ENCODE measurements at regions of chr6 and their contacts with region 1.

Region 1: GRCh38 chr6:26196846-26197648 is 109.8 kb downstream of the HFE start:
- DNase-seq: peak; percentile 99
- ATAC-seq: peak; percentile 61
- H3K4me3 ChIP-seq: peak overlapping the region; percentile 73
- H3K27ac ChIP-seq: peak overlapping the region; percentile 80
- H3K4me1 ChIP-seq: no peaks in the 10 kb centered on the region
- H3K27me3 ChIP-seq: no peaks in the 10 kb centered on the region
- CTCF ChIP-seq: no peak
- EP300 ChIP-seq: no peak
- POLR2A ChIP-seq: peak; percentile 99
- RAD21 ChIP-seq: no peak

Region 2: GRCh38 chr6:25788305-25788922 is 408.6 kb before region 1 on chr6:
- CTCF ChIA-PET with region 1: no interaction called
- POLR2A ChIA-PET with region 1: no interaction called
- RAD21 ChIA-PET with region 1: no interaction called
- SMC1A ChIA-PET with region 1: no interaction called
- in situ Hi-C with region 1: no loop called
- intact Hi-C with region 1: no loop called
- DNase-seq: no peak
- ATAC-seq: peak; percentile 82
- H3K4me3 ChIP-seq: no peak overlapping the region
- H3K27ac ChIP-seq: no peak overlapping the region
- H3K4me1 ChIP-seq: no peaks in the 10 kb centered on the region
- H3K27me3 ChIP-seq: no peaks in the 10 kb centered on the region; a peak in 1 of 4 replicates
- CTCF ChIP-seq: peak; percentile 55 to 69 (median 56); a peak in 5 of 6 replicates
- EP300 ChIP-seq: no peak
- POLR2A ChIP-seq: no peak
- RAD21 ChIP-seq: peak; percentile 58

Region 3: GRCh38 chr6:26031595-26032339 is 165.3 kb before region 1 on chr6:
- CTCF ChIA-PET with region 1: no interaction called
- POLR2A ChIA-PET with region 1: interaction called, 4 read pairs
- RAD21 ChIA-PET with region 1: interaction called, 3 read pairs
- SMC1A ChIA-PET with region 1: interaction called, 3 read pairs
- in situ Hi-C with region 1: no loop called
- intact Hi-C with region 1: loop called (anchors 5 kb)
- DNase-seq: peak; percentile 97
- ATAC-seq: peak; percentile 70
- H3K4me3 ChIP-seq: peak overlapping the region; percentile 75
- H3K27ac ChIP-seq: peak overlapping the region; percentile 95
- H3K4me1 ChIP-seq: peaks cover 9% of the 10 kb centered on the region; the same call in 1 of the 2 replicates
- H3K27me3 ChIP-seq: no peaks in the 10 kb centered on the region
- CTCF ChIP-seq: 0 out of 6 replicates have a peak, but pooled peaks of 1 of the 3 experiments have one; percentile 11
- EP300 ChIP-seq: peak in 1 of 2 experiments; percentile 10; a peak in 1 of 4 replicates
- POLR2A ChIP-seq: peak; percentile 96
- RAD21 ChIP-seq: no peak

Region 4: DNA sequence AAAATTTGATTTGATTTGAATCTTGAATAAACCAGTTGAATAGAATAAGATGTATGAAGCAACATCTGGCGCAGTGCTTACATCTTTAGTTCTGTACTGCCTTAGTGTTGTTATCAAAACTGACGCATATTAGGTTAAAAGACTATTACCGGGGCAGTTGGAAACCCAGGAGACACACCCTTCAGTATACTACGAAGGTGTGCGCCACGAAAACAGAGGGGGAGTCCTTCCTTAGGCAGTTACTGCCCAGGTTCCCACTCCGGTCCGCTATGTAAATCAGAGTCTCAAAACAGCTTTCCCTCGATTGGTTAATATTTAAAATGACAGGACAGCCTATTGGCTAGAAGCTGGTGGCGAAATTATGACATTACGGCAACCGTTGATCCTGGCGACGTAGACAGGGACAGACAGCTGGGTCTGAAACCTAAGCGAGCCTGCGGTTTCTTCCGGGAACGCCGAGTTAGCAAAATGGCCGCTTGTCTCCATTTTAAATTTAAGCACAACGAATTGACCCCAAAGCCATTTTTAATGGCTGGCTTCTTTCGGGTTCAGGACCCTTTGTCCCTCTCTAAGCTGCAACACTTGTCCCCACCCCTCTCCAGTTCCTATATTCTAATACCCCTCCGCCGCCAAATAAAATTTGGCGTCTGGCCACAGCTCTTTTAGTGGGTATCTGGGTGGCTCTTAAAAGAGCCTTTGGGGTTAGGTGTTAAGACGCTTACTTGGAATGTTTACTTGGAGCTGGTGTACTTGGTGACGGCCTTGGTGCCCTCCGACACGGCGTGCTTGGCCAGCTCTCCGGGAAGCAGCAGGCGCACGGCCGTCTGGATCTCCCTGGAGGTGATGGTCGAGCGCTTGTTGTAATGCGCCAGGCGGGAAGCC is 74.0 kb before region 1 on chr6:
- CTCF ChIA-PET with region 1: interaction called, 9 read pairs
- POLR2A ChIA-PET with region 1: interaction called, 20 read pairs
- RAD21 ChIA-PET with region 1: interaction called, 12 read pairs
- SMC1A ChIA-PET with region 1: interaction called, 19 read pairs
- in situ Hi-C with region 1: loop called (anchors 5 kb)
- intact Hi-C with region 1: loop called (anchors 1 kb)
- DNase-seq: peak; percentile 99
- ATAC-seq: peak; percentile 71
- H3K4me3 ChIP-seq: peak overlapping the region; percentile 65
- H3K27ac ChIP-seq: peak overlapping the region; percentile 95
- H3K4me1 ChIP-seq: peaks cover 3% of the 10 kb centered on the region; the same call in 1 of the 2 replicates
- H3K27me3 ChIP-seq: no peaks in the 10 kb centered on the region
- CTCF ChIP-seq: no peak
- EP300 ChIP-seq: peak; percentile 85 to 93; a peak in 3 of 4 replicates
- POLR2A ChIP-seq: peak; percentile 86
- RAD21 ChIP-seq: no peak

Region 5: GRCh38 chr6:26183581-26184366 is 13.3 kb before region 1 on chr6:
- CTCF ChIA-PET with region 1: interaction called, 12 read pairs
- POLR2A ChIA-PET with region 1: interaction called, 109 read pairs
- RAD21 ChIA-PET with region 1: interaction called, 23 read pairs
- SMC1A ChIA-PET with region 1: interaction called, 13 read pairs
- in situ Hi-C with region 1: no loop called
- intact Hi-C with region 1: no loop called
- DNase-seq: peak; percentile 84
- ATAC-seq: peak; percentile 71
- H3K4me3 ChIP-seq: peak overlapping the region; percentile 59
- H3K27ac ChIP-seq: peak overlapping the region; percentile 78
- H3K4me1 ChIP-seq: peaks cover 23% of the 10 kb centered on the region
- H3K27me3 ChIP-seq: no peaks in the 10 kb centered on the region
- CTCF ChIP-seq: no peak
- EP300 ChIP-seq: no peak
- POLR2A ChIP-seq: peak; percentile 85
- RAD21 ChIP-seq: no peak

Region 6: DNA sequence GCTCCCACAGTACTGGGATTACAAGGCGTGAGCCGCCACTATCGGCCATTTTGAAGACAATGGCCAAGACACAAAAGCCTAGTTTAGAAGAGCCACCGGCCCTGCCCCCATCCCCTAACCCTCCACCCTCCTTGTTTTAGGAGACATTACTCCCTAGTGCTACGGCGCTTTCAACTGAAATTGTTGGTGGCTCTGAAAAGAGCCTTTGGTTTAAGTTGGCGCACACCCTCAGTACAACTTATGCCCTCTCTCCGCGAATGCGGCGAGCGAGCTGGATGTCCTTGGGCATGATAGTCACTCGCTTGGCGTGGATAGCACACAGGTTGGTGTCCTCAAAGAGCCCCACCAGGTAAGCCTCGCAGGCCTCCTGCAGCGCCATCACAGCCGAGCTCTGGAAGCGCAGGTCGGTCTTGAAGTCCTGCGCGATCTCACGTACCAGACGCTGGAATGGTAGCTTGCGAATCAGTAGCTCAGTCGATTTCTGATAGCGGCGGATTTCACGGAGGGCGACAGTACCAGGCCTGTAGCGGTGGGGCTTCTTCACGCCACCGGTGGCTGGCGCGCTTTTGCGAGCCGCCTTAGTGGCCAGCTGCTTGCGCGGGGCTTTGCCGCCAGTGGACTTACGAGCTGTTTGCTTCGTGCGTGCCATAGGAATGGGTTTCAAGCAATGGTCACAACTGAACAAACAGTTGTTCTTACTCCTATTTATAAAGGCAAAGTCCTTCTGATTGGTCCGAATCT is 53.1 kb after region 1 on chr6:
- CTCF ChIA-PET with region 1: interaction called, 9 read pairs
- POLR2A ChIA-PET with region 1: interaction called, 16 read pairs
- RAD21 ChIA-PET with region 1: interaction called, 23 read pairs
- SMC1A ChIA-PET with region 1: interaction called, 4 read pairs
- in situ Hi-C with region 1: no loop called
- intact Hi-C with region 1: no loop called
- DNase-seq: peak; percentile 97
- ATAC-seq: peak; percentile 64
- H3K4me3 ChIP-seq: peak overlapping the region; percentile 76
- H3K27ac ChIP-seq: peak overlapping the region; percentile 91
- H3K4me1 ChIP-seq: no peaks in the 10 kb centered on the region; the same call in 1 of the 2 replicates
- H3K27me3 ChIP-seq: no peaks in the 10 kb centered on the region
- CTCF ChIP-seq: peak; percentile 56 to 67 (median 65)
- EP300 ChIP-seq: no peak
- POLR2A ChIP-seq: peak; percentile 97
- RAD21 ChIP-seq: 0 out of 2 replicates have a peak, but pooled peaks have one; percentile 22

Region 7: DNA sequence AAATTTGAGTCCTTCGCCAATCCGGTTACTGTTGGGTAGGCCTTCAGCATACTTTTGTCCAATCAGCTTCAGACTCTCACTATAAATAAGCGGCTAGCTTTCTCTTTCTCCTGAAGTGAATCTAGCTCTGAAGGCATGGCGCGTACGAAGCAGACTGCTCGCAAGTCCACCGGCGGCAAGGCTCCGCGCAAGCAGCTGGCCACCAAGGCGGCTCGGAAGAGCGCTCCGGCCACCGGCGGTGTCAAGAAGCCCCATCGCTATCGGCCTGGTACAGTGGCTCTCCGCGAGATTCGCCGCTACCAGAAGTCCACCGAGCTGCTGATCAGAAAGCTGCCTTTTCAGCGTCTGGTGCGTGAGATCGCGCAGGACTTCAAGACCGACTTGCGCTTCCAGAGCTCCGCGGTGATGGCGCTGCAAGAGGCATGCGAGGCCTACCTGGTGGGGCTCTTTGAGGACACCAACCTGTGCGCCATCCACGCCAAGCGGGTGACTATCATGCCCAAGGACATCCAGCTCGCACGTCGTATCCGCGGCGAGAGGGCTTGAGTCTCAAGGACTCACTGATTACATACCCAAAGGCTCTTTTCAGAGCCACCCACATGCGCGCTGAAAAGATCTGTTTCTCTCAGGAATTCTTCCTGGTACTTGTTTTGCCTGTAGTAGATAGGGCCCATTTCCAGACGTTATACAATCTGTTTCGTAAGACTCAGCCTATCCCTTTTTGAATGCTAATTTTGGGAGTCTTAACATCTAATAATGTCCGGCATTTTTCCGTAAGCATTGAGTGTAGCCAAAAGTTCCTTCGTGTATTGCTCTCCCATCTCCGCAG is 1613.1 kb after region 1 on chr6:
- CTCF ChIA-PET with region 1: interaction called, 3 read pairs
- POLR2A ChIA-PET with region 1: interaction called, 3 read pairs
- RAD21 ChIA-PET with region 1: interaction called, 3 read pairs
- SMC1A ChIA-PET with region 1: no interaction called
- in situ Hi-C with region 1: no loop called
- intact Hi-C with region 1: loop called (anchors 5 kb)
- DNase-seq: peak; percentile 98
- ATAC-seq: peak; percentile 43
- H3K4me3 ChIP-seq: peak overlapping the region; percentile 74
- H3K27ac ChIP-seq: peak overlapping the region; percentile 82
- H3K4me1 ChIP-seq: peaks cover 25% of the 10 kb centered on the region
- H3K27me3 ChIP-seq: no peaks in the 10 kb centered on the region
- CTCF ChIP-seq: peak in 1 of 3 experiments; percentile 19; a peak in 2 of 6 replicates
- EP300 ChIP-seq: no peak
- POLR2A ChIP-seq: peak; percentile 95
- RAD21 ChIP-seq: no peak